PC-9 (cell line): ENCODE measurements at regions of chr18 and their contacts with region 1.

Region 1: DNA sequence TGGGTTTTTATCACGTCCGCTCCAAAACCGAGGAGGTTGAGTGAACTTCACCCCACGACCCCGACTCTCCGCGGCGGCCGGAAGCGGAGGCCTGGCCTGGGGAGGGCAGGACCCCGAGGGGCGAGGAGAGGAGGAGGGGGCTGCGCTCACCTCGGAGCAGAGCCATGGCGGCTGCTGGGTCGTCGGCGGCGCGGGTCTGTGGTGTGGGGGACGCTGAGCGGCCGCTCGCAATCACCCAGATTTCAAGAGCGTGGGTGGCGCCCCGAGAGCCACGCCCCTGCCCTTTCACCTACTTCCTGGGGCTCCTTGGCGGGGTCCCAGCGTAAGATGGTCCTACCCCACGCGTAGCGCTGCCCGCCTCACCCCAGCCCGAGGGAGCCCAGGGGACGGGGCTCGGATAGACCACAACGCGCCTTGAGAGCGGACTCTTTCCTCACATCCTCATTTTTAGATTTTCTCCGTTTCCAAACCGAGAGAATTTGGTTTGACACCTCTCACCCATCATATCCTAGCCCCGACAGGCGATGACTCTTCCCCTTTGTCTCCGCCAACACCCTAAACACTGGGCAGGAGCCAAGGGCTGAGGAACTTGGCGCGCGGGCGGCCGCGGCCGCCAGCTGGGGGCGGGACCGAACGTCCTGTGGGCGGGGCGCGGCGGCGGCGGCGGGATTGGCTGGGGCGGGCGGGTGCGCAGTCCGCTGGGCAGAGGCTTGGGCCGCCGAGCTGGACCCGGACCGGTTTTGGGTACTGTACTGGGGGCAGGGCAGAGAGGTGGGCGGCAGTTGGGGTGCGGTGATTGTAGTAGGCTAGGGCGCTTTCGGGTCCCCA is at the start of gene ACAA2:
- DNase-seq: peak; percentile 72 to 74
- H3K4me3 ChIP-seq: peak within 1 kb of the TSS; percentile 77
- H3K27ac ChIP-seq: peak within 1 kb of the TSS; percentile 72
- H3K4me1 ChIP-seq: peaks cover 23% of the 10 kb centered on the region
- H3K27me3 ChIP-seq: no peaks in the 10 kb centered on the region
- CTCF ChIP-seq: no peak
- total RNA-seq, gene ACAA2: 33.7 and 37.7 TPM in 2 replicates

Region 2: DNA sequence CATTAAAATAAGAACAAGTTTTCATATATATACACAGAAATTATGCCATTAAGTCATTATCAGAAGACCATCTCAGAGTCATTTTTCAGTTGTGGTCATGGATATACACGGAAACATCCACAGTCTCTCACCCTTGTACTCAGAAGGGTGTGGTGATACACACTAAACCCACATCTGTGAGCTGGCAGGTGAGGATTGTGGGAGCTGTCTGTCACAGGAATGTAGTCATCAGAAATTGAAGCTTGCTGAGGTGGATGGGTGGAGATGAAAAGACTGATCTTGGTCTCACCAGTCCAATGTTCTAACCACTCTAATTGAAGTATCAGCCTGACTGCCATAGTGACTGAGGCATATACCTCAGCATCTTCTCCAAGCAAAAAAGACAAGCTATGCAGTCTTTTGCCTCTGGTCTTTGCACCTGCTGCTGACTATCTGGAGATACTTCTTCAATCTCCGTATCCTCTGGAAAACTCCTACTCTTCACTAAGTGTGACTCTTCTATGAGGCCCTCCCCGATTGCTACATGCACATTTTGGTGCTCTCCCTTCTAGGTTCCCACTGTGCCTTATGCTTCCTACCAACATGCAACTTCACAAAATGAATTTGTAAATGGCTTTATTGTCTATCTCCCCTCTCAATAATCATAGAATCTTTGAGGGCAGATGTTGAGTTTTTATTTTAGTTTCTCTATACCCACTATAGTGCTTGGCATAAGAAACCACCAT is 585.9 kb before region 1 on chr18:
- CTCF ChIA-PET with region 1: no interaction called
- POLR2A ChIA-PET with region 1: no interaction called
- intact Hi-C with region 1: no loop called
- DNase-seq: no peak
- H3K4me3 ChIP-seq: no peak overlapping the region
- H3K27ac ChIP-seq: no peak overlapping the region
- H3K4me1 ChIP-seq: no peaks in the 10 kb centered on the region
- H3K27me3 ChIP-seq: no peaks in the 10 kb centered on the region
- CTCF ChIP-seq: no peak

Region 3: GRCh38 chr18:49833814-49834213 is 20.3 kb after region 1 on chr18:
- CTCF ChIA-PET with region 1: no interaction called
- POLR2A ChIA-PET with region 1: interaction called, 10 read pairs
- intact Hi-C with region 1: no loop called
- DNase-seq: no peak
- H3K4me3 ChIP-seq: no peak overlapping the region
- H3K27ac ChIP-seq: no peak overlapping the region
- H3K4me1 ChIP-seq: peaks cover 15% of the 10 kb centered on the region
- H3K27me3 ChIP-seq: no peaks in the 10 kb centered on the region
- CTCF ChIP-seq: no peak

Region 4: GRCh38 chr18:49839012-49839411 is 25.5 kb after region 1 on chr18:
- CTCF ChIA-PET with region 1: no interaction called
- POLR2A ChIA-PET with region 1: interaction called, 13 read pairs
- intact Hi-C with region 1: no loop called
- DNase-seq: peak; percentile 42 to 72
- H3K4me3 ChIP-seq: no peak overlapping the region
- H3K27ac ChIP-seq: no peak overlapping the region
- H3K4me1 ChIP-seq: peaks cover 15% of the 10 kb centered on the region
- H3K27me3 ChIP-seq: no peaks in the 10 kb centered on the region
- CTCF ChIP-seq: no peak

Region 5: DNA sequence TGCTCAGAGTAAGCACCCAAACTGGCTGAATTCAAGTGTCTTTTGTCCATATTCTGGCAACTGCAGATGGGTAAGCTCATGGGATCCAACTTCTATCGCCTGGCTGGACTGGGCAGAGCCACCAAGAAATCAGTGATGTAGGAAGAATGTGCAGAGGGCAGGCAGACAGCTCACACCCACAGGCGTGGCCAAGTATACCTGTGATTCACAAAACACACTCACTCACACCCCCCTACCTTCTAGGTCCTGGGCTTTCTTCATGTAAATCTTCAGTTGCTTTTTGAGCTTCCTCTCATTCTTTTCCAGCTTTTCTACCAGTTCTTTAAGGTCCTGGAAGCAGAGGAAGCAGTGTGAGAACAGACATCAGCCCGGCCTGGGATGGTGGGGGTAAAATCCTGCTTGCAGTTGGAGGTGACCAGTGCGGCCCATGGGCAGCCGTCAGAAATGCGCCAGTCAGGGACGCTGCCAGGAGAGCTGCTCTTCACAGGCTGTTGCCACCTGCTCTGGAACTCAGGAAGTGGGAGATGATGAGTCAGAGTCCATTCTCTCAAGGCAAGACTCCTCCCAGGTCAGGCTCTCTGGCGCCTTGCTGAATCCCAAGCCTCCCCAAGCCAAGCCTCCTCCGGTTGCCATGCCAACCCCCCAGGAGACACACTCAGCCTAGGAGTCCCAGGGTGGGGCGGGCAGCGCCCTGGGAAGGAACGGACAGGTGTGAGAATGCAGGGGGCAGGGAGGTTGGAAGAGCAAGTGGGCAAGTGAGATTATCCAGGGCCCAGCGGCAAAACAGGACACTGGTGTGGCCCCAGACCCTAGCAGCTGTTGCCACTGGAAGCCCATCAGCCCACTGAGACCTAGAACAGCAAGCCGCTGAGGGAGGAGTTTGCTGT is 36.0 kb after region 1 on chr18:
- CTCF ChIA-PET with region 1: no interaction called
- POLR2A ChIA-PET with region 1: no interaction called
- intact Hi-C with region 1: loop called (anchors 5 kb)
- DNase-seq: peak; percentile 93 to 99
- H3K4me3 ChIP-seq: peak overlapping the region; percentile 43
- H3K27ac ChIP-seq: peak overlapping the region; percentile 90
- H3K4me1 ChIP-seq: peaks cover 29% of the 10 kb centered on the region
- H3K27me3 ChIP-seq: no peaks in the 10 kb centered on the region
- CTCF ChIP-seq: no peak